Right lobe of liver (tissue), 6 donors: ENCODE measurements at regions of chr14 and their contacts with region 1.

Region 1: DNA sequence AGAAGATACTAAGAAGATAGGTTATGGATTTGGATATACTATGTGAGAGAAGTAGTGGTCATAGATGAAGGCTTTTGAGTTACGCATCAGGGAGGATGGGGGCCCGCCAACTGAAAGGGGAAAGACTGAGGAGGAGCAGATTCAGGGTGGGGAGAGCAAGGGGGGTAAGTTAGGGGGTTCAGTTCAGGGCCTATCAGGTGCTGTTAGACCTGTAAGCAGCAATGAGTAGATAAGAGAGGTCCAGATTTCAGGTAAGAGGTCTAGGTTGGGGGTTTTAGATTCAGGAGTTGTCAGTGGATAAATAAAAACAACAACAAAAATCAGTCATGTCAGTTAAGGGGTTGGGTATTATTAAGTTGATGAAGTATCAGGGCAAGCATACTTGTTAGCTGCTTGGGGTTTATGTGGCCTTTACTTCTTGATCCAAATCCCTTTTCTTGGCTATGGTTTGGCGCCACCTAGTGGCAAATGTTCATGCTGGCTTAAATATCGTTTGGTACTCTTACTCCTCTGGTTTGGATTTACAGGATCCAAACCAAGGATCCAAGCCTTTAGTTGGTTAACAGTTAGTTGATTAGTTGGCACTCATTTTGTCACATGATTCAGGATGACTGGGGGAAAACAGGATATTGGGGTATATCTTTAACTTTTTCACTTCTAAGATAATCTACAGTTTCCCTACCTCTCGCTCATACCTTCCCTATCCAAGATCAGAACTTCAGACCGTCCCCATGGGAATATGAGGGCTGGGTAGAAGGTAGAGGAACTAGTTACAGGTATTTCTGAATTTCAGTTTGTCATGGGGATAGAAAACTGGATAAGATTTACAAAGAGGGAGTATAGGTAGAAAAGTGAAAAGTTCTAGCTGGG is 65.1 kb downstream of the PCNX1 start:
- DNase-seq: peak; percentile 60 to 83 (median 72)
- ATAC-seq: peak; percentile 92 to 97 (median 94)
- H3K4me3 ChIP-seq: no peak overlapping the region
- H3K27ac ChIP-seq: no peak overlapping the region
- H3K4me1 ChIP-seq: no peaks in the 10 kb centered on the region
- H3K27me3 ChIP-seq: no peaks in the 10 kb centered on the region
- CTCF ChIP-seq: peak; percentile 92 to 96 (median 95)
- POLR2A ChIP-seq: no peak

Region 2: DNA sequence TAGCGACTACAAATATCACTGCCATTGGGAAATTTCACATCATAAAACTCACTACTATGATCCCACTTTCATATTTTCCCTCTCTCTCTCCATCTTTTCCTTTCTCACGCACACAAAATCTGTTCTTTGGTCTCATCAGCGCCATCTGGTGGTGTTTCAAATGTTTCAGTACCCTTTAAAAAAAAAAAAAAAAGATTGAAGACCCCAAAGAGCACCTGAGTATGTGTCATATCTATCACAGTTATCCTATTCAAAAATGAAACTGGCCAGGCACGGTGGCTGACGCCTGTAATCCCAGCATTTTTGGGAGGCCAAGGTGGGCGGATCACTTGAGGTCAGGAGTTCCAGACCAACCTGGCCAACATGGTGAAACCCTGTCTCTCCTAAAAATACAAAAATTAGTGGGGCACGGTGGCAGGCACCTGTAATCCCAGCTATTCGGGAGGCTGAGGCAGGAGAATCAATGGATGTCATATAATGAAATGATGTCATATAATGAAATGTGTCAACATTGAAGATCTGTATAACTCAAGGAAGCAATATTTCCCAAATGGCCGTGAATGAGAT is 258.2 kb before region 1 on chr14:
- intact Hi-C with region 1: loop called in 1 of 2 experiments (anchors 10 kb)
- DNase-seq: no peak
- ATAC-seq: peak in 2 of 4 donors; percentile 31 to 32
- H3K4me3 ChIP-seq: no peak overlapping the region
- H3K27ac ChIP-seq: no peak overlapping the region
- H3K4me1 ChIP-seq: peaks cover 0 to 13% (median 4%) of the 10 kb centered on the region in 4 donors
- H3K27me3 ChIP-seq: no peaks in the 10 kb centered on the region
- CTCF ChIP-seq: peak; percentile 66 to 72 (median 69)
- POLR2A ChIP-seq: no peak

Region 3: DNA sequence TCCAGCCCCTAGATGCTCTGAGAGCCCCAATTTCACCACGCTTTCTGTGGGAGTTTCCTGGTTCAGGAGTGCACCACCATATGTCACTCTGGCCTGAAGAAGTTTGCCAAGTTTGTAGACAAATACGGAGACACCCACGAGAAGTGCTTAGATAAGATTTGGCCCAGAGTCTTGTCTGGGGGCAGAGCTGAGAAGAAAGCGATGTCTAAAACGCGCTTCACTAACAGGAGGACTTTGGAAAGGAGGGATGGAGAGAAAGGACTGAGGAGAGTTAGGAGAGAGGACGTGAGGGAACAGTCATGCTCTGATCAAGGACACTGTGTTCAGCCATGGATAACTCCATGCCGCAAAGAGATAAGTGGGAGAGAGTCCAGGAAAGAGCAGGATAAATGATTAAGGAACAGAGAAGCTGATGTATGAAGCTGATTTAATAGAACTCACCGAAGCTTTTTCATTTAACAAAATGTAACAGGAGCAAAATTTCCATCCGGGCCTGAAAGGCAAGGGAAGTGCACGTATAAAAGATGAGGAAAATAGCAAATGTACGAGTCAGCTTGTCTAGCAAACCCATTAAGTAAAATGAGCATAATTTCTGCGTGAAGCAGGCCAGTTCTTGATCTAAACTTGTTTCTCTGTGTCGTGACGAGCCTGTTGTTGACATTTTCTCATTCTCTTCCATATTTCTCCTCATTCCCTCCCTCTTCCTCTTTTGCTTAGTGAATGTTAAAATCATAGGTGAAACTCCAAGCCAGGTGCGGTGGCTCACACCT is 139.6 kb before region 1 on chr14:
- intact Hi-C with region 1: loop called in 1 of 2 experiments (anchors 10 kb)
- DNase-seq: no peak
- ATAC-seq: no peak
- H3K4me3 ChIP-seq: no peak overlapping the region
- H3K27ac ChIP-seq: no peak overlapping the region
- H3K4me1 ChIP-seq: peaks cover 0 to 9% (median under 1%) of the 10 kb centered on the region in 4 donors
- H3K27me3 ChIP-seq: no peaks in the 10 kb centered on the region
- CTCF ChIP-seq: no peak
- POLR2A ChIP-seq: no peak